ENCODE measurements at regions of chr18 and their contacts with region 1.

Region 1: GRCh38 chr18:31741097-31741735 is 19.5 kb downstream of the SLC25A52 start:
- DNase-seq: peak; percentile 46
- ATAC-seq: no peak

Region 2: DNA sequence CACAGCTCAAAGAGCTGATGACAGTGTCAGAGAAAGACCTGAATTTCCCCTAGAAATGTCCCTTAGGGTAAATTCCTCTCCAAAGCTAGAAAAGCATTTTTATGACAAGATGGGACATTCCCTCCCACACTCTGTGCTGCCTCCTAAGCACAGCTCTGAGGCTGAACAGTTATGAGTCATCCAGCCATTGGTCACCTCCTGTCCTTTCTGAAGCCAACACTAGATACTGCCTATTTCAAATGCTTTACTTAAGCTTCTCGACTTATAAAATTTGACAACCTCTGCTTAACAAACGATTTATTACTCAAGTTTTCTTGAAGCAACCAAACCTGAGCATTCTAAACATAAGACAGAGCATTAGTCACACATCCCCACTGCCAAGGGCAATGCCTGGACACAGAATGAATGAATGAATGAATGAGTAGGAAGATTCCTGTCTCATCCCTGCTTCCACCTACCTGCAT is 92.2 kb before region 1 on chr18:
- intact Hi-C with region 1: no loop called
- DNase-seq: no peak
- ATAC-seq: peak in 1 of 2 donors; percentile 79

Region 3: DNA sequence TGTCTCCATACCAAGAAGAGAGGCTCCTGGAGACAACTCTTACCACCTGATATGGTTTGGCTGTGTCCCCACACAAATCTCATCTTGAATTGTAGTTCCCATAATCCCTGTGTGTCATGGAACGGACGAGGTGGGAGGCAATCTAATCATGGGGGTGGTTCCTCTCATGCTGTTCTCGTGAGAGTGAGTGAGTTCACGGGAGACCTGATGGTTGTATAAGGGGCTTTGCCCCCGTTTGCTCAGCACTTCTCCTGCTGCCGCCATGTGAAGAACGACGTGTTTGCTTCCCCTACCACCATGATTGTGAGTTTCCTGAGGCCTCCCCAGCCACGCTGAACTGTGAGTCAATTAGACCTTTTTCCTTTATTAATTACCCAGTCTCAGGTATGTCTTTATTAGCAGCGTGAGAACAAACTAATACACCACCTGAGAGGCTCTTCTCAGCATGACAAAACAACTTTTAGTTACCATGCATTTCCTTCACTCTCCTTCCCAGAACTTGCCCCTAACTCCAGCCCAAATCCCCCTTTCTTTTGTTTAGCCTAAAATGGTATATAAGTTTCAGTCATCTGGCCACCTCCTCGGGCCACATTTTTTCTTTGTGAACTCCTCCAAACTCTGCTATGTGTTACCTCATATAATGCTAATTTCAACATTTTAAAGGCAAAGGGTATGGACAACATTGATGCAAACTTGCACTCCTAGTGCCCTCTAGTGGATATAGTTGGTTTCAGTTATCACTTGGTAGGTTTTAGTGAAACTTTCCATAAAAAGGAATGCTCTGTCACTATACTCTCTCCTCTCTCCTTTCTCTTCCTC is 78.1 kb after region 1 on chr18:
- intact Hi-C with region 1: loop called (anchors 2 to 10 kb)
- DNase-seq: no peak
- ATAC-seq: peak; percentile 59 to 70

Region 4: GRCh38 chr18:31954349-31954748 is 213.1 kb after region 1 on chr18:
- intact Hi-C with region 1: no loop called
- DNase-seq: peak; percentile 67
- ATAC-seq: peak; percentile 34 to 56

Region 5: GRCh38 chr18:31977270-31977872 is 236.2 kb after region 1 on chr18:
- intact Hi-C with region 1: loop called (anchors 5 to 10 kb)
- DNase-seq: no peak
- ATAC-seq: peak; percentile 63 to 68